Heart right ventricle (tissue), 16 donors: ENCODE measurements at regions of chr2 and their contacts with region 1.

Region 1: GRCh38 chr2:85888684-85889626 is at the start of gene ST3GAL5:
- DNase-seq: peak; percentile 90 to 96
- ATAC-seq: peak; percentile 85 to 92 (median 88)
- H3K4me3 ChIP-seq: peak within 1 kb of the TSS; percentile 57 to 79 (median 70)
- H3K27ac ChIP-seq: peak within 1 kb of the TSS; percentile 37 to 92 (median 74)
- H3K4me1 ChIP-seq: peaks cover 3 to 65% (median 36%) of the 10 kb centered on the region in 9 donors
- H3K27me3 ChIP-seq: peaks cover 0 to 5% (median 0%) of the 10 kb centered on the region in 7 donors
- CTCF ChIP-seq: peak; percentile 11 to 81 (median 72)
- total RNA-seq, gene ST3GAL5: 2.0 to 11.8 (median 3.8) TPM

Region 2: GRCh38 chr2:85826990-85827878 is 61.7 kb before region 1 on chr2:
- intact Hi-C with region 1: loop called in 5 of 10 experiments (anchors 5 kb)
- DNase-seq: peak; percentile 73 to 80
- ATAC-seq: peak; percentile 88 to 97 (median 93)
- H3K4me3 ChIP-seq: peak overlapping the region in 2 of 10 donors; percentile 22 to 31
- H3K27ac ChIP-seq: peak overlapping the region in 1 of 10 donors; percentile 22
- H3K4me1 ChIP-seq: peaks cover 0 to 12% (median 8%) of the 10 kb centered on the region in 9 donors
- H3K27me3 ChIP-seq: peaks cover 0 to 6% (median 0%) of the 10 kb centered on the region in 7 donors
- CTCF ChIP-seq: peak; percentile 83 to 95 (median 94)

Region 3: GRCh38 chr2:85999061-85999831 is 110.3 kb after region 1 on chr2:
- intact Hi-C with region 1: loop called in 1 of 10 experiments (anchors 5 kb)
- DNase-seq: no peak
- ATAC-seq: peak in 7 of 8 donors; percentile 30 to 64 (median 52)
- H3K4me3 ChIP-seq: no peak overlapping the region
- H3K27ac ChIP-seq: peak overlapping the region; percentile 46 to 88 (median 68)
- H3K4me1 ChIP-seq: peaks cover 25 to 70% (median 63%) of the 10 kb centered on the region in 9 donors
- H3K27me3 ChIP-seq: no peaks in the 10 kb centered on the region
- CTCF ChIP-seq: no peak

Region 4: DNA sequence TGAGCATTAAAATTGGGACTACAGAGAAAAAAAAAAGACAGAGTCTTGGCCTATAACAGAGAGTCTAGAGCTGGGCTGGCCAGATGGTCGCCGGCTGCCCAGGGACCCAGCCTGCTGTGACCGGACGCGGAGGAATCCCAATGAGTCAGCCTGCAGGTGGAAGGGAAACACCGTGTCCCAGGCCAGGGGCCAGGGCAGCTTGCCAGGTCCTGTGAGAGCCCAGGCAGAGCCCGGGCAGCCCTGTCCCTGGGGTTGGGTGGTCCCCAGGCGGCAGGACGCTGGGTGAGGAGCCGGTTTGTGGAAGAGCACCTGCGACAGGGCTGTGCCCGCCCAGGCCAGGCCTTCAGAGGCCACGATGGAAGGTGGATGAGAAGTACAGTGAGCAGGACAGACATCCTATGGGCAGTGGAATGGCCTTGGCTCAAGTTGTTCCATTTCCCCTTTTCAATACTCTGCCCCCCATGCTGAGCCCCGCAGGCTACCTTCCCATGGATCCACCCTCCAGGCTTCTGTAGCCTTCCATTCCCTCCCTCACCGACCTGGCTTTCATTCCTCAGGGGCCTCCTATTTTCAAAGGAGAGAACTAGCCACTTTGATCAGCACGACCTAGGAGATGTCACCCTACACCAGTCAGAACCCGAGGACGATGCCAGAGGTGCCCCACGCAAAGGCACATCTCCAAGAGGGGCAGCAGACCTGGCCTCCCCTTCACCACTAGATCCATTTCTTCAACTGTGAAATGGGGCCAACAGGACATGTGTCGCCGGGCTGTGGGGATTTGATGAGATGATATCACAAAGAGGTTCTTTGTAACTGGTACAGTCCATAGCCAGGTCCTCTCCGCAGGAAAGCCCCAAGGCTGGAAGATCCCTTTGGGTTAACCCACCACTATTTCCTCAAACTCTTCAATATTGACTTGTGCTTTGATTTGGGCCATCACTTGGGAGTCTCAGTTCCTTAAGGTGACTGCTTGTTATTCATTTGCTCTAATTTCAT is 129.2 kb after region 1 on chr2:
- intact Hi-C with region 1: no loop called
- DNase-seq: peak in 1 of 2 donors; percentile 52
- ATAC-seq: peak in 6 of 8 donors; percentile 51 to 70 (median 65)
- H3K4me3 ChIP-seq: no peak overlapping the region
- H3K27ac ChIP-seq: peak overlapping the region in 1 of 10 donors; percentile 80
- H3K4me1 ChIP-seq: peaks cover 6 to 32% (median 16%) of the 10 kb centered on the region in 9 donors
- H3K27me3 ChIP-seq: peaks cover 0 to 51% (median 23%) of the 10 kb centered on the region in 7 donors
- CTCF ChIP-seq: no peak

Region 5: DNA sequence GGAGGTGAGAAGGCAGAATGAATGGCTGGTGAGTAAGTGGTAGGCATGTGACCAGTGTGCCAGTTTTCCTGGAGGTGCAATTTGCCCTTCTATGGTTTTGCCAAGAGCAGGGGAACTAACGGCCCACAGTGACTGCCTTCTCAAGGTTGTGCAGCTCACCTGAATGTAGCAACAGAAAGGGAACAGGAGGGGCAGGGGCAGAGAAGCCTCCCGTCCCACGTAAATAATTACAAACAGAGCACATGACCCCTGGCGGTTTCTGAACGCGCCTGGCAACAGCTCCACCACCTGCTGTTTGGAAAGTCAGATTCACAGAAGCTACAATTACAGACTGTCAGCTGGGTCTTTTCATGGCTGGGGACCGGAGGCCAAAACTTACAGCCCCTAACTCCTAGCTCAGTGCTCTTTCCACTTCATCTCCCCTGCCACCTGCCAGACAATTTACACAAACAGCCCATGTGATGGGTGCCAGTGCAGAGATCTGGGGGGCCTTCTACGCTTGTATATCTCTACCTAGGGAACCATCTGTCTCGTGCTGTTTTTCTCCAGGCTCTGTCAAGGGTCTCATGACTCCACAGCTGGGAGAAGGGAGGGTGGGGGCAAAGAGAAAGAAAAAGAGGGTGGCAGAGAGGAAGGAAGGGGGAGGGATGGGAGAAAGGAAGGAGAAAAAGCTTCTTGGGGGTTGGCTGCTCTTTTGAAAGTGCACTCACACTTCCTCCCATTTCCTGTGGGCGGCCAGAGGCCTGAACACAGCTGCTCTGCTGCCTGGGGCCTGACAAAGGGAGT is 147.1 kb after region 1 on chr2:
- intact Hi-C with region 1: loop called in 6 of 10 experiments (anchors 2 to 10 kb)
- DNase-seq: peak; percentile 75 to 86
- ATAC-seq: peak; percentile 72 to 90 (median 82)
- H3K4me3 ChIP-seq: peak overlapping the region in 2 of 10 donors; percentile 2 to 9
- H3K27ac ChIP-seq: peak overlapping the region; percentile 71 to 93 (median 84)
- H3K4me1 ChIP-seq: peaks cover 18 to 61% (median 52%) of the 10 kb centered on the region in 9 donors
- H3K27me3 ChIP-seq: no peaks in the 10 kb centered on the region
- CTCF ChIP-seq: peak in 4 of 9 donors; percentile 6 to 18 (median 9)

Region 6: DNA sequence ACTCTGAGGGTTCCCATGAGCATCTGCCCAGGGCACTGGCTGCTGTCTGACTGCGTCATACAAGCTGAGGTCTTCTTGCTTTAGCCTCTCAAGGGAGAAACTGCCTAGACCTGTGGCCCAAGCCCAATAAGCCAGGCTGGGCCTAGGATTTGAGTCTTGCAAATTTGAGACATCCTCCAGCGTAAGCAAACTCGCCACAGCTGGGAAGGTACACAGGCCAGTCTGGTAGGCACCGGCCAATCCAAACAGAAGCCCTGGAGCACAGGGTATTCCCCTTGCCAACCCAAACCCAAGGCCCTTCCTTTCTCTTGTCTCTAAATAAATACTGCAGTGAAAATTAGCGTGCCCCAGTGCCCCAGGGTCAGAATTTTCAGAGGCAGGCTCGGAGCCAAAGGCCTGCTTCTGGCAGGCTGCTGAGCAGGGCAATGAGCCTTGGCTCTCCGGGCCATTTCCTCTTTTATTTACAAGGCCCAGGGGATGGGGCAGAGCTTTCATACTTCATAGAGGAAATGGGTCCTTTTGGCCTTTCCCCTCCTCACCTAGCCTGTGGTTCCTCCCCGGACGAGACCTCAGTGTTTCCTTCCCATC is 183.4 kb after region 1 on chr2:
- intact Hi-C with region 1: loop called in 6 of 10 experiments (anchors 5 kb)
- DNase-seq: peak; percentile 61 to 64
- ATAC-seq: peak; percentile 76 to 82 (median 80)
- H3K4me3 ChIP-seq: no peak overlapping the region
- H3K27ac ChIP-seq: peak overlapping the region in 9 of 10 donors; percentile 8 to 80 (median 56)
- H3K4me1 ChIP-seq: peaks cover 0 to 44% (median 19%) of the 10 kb centered on the region in 9 donors
- H3K27me3 ChIP-seq: no peaks in the 10 kb centered on the region
- CTCF ChIP-seq: no peak